ENCODE measurements at regions of chr1 and their contacts with region 1.

Region 1: DNA sequence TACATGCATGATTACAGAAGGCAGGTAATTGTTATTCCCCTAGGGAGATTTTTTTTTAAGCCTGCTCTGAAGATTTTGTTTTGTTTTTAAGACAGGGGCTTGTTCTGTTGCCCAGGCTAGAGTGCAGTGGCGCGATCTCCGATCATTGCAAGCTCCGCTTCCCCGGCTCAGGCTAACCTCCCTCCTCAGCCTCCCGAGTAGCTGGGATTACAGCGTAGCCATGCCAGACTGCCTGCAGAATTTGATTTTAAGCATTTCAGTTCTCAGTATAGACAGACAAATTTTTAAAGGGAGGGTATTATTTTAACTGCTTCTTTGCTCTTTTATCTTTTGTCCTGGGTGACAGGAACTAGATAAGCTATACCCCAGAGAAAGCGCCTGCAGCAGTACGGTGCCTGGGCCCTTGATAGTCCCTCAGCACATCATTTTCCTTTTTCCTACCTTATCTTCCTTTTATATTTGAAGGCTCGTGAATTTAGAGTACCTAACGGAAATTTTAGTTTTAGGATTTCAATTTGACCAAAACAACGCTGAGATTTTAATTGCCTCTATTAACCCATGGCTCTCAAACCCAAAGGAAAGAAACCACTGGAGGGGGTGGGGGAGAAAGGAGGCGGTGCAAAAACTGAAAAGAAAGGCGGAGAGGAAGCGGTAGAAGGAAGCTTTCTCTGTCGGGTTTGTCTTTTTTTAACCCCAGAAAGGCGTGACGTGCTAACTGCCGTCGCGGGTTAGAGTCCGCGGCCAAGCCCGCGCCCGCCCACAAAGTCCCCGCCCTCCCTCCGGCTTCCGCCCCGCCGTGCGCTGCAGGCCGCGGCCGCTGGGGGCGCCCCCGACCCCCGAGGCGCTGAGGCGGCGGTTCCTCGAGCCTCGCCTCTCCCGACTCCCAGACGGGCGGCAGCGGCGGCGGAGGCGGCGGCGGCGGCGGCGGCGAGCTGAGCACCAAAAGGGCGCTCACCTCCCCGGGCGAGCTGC is at the start of gene EEIG2:
- H3K4me3 ChIP-seq: peak within 1 kb of the TSS; percentile 54
- H3K27ac ChIP-seq: no peak within 1 kb of the TSS; the same call in 1 of the 2 replicates
- H3K4me1 ChIP-seq: peaks cover 7% of the 10 kb centered on the region
- CTCF ChIP-seq: no peak

Region 2: DNA sequence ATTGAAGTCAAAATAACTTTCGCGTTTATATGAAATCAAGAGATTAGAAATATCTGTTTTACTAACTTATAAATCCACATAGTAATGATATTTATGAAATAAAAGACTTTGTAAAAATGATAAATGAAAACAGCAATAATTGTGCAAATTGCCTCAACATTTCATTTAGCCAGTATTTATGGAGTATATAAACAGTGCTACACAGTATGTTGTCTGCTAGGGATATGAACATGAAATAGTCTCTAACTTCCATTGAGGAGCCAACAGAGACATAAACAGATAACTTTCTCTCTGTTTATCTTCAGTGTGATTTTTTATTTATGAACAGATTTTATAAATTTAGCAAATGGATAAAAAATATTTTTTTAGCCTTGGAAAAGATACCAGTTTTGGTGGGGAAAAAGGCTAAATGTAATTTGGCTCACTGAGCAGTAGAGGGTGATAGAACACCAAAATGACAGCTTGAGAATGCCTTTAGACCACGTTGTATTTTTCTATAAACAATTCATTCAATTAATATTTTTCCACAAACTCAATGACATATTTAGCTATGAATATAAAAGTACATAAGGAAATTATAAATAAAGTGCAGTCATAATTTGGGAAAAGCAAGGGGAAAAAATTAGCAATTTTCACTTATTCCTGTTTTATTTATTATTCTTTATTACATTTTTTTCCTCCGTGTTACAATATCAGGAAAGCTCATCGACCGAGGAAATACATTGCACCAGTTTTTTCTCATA is 47.1 kb before region 1 on chr1:
- CTCF ChIA-PET with region 1: interaction called, 32 read pairs
- POLR2A ChIA-PET with region 1: no interaction called
- H3K4me3 ChIP-seq: no peak overlapping the region
- H3K27ac ChIP-seq: no peak overlapping the region
- H3K4me1 ChIP-seq: no peaks in the 10 kb centered on the region
- CTCF ChIP-seq: peak; percentile 40

Region 3: DNA sequence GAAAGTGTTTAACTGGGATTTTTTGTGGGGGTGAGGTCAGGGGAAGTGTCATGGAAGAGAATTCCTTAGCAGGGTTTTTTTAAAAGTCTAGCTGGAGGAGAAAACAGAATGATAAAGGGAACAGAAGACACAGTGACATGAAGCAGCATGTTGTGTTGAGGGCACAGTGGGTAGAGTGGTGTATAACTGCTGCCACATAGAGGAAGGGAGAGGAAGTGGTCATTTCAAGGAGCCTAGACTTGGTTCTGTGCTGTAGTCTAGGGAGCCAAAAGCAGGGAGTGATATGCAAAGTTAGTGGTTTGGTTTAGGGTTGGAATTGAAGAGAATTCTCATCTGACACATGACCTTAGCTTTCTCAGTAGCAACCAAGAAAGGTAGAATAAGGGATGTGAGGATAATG is 10.6 kb after region 1 on chr1:
- CTCF ChIA-PET with region 1: interaction called, 16 read pairs
- POLR2A ChIA-PET with region 1: no interaction called
- H3K4me3 ChIP-seq: no peak overlapping the region
- H3K27ac ChIP-seq: no peak overlapping the region
- H3K4me1 ChIP-seq: peaks cover 4% of the 10 kb centered on the region; the same call in 1 of the 2 replicates
- CTCF ChIP-seq: 0 out of 2 replicates have a peak, but pooled peaks have one; percentile 44

Region 4: DNA sequence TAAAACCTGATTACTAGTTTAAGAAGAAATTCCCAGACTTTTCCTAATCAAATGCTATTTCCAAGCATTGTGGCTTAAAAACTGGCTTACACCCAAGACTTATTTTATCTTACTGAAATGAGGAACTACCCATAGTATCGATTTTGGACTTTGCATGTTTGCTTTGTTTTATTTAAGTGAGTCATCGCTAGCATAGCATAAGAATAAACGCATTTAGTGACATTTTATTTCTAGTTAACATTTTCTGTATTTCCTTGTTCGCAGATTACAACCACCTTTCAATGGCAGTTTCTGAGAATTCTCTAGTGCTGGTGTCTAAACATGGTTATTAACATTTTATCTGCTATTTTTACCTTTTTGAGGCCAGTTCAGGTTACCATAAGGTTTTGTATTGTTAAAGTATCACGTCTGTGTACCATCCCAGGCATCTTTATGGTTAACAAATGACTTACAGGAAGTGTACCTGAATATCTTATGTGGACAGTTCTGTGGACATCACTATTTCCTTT is 24.9 kb after region 1 on chr1:
- CTCF ChIA-PET with region 1: interaction called, 17 read pairs
- POLR2A ChIA-PET with region 1: interaction called, 5 read pairs
- H3K4me3 ChIP-seq: no peak overlapping the region
- H3K27ac ChIP-seq: no peak overlapping the region
- H3K4me1 ChIP-seq: peaks cover 16% of the 10 kb centered on the region; the same call in 1 of the 2 replicates
- CTCF ChIP-seq: no peak

Region 5: GRCh38 chr1:108643492-108644335 is 84.2 kb after region 1 on chr1:
- CTCF ChIA-PET with region 1: interaction called, 20 read pairs
- POLR2A ChIA-PET with region 1: no interaction called
- H3K4me3 ChIP-seq: no peak overlapping the region
- H3K27ac ChIP-seq: no peak overlapping the region
- H3K4me1 ChIP-seq: no peaks in the 10 kb centered on the region
- CTCF ChIP-seq: peak; percentile 34; the same call in 1 of the 2 replicates

Region 6: DNA sequence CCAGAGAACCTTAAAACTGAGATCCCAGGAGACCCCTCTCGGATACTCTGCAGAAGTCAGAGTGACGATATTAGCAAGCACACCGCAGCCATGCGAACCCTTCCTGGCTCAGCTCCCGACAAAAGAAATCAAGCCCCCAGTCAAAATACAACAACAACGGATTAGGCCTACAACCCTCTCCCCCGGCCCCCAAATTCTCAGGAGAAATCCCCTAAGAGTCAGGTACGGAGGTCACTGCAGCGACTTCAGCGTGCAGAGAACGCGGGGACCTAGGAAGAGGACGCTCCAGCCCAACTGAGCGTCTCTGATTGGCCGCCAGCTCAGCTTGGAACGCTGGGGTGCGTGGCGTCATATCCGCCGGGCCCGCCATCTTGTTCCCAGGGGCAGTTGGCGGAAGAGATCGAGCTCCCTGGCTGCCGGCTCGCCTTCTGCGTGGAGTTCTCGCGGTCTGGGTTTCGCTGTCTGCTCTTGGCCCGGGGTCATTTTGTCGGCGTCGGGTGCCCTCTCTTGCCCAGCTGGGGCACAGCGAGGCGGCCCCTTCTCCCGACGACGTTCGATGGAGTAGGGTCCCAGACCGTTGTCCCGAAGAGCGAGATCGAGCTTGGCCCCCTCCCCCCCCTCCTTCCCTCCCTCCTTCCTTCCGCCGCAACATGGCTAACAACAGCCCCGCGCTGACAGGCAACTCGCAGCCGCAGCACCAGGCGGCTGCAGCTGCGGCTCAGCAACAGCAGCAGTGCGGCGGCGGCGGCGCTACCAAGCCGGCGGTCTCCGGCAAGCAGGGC is 132.6 kb after region 1 on chr1 and contains the start of gene PRPF38B:
- CTCF ChIA-PET with region 1: no interaction called
- POLR2A ChIA-PET with region 1: interaction called, 15 read pairs
- H3K4me3 ChIP-seq: peak within 1 kb of the TSS; percentile 72
- H3K27ac ChIP-seq: peak within 1 kb of the TSS; percentile 81
- H3K4me1 ChIP-seq: 0 out of 2 replicates have a peak, but pooled peaks cover 3% of the 10 kb centered on the region
- CTCF ChIP-seq: no peak

Measured in HEK293 (cell line).